HEK293 (cell line): ENCODE measurements at regions of chr19 and their contacts with region 1.

Region 1: GRCh38 chr19:48842789-48843162 is 6.5 kb upstream of the HSD17B14 start:
- H3K4me3 ChIP-seq: no peak overlapping the region
- H3K27ac ChIP-seq: no peak overlapping the region
- H3K4me1 ChIP-seq: no peaks in the 10 kb centered on the region
- CTCF ChIP-seq: peak; percentile 74

Region 2: DNA sequence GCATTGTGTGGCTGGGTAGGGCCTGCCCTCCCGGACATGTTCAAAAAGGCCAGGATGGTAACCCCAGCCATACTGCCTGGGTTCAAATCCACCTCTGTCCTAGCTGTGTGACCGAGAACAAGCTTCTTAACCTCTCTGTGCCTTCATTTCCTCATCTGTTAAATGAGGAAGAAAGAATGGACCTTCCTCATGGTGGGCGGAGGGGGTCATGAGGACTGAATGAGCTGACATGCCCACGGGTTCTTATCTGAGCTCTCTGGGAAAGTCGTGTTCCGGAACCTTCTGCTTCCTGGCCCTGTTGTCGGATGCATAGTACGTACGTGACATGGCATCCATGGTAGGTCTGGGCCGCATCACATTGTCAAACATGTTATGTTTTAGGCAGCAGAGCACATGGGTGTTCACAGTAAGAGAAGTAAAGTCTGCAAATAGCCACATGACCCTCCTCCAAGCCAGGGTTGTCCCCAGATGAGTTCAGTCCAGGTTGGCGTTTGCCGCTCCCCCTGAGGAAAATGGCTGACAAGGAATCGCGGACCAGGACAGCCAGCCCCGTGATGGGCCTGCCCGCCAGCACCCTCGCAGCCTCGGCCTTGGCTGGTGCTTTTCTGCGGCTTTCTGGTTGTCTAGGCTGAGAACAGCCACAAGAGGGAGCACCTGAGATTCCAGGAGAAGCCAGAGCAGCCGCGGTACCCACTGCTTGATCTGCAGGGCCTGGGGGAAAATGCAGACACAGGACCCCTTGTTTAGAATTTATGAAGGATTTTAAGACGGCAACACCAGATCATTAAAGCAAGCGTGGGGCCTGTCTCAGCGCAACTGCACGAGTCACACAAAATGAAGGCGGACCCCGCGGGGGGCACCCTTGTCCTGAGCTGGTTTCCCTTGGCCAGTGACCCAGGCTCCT is 167.6 kb before region 1 on chr19:
- CTCF ChIA-PET with region 1: interaction called, 20 read pairs
- POLR2A ChIA-PET with region 1: no interaction called
- H3K4me3 ChIP-seq: no peak overlapping the region
- H3K27ac ChIP-seq: no peak overlapping the region
- H3K4me1 ChIP-seq: no peaks in the 10 kb centered on the region; the same call in 1 of the 2 replicates
- CTCF ChIP-seq: peak; percentile 90

Region 3: DNA sequence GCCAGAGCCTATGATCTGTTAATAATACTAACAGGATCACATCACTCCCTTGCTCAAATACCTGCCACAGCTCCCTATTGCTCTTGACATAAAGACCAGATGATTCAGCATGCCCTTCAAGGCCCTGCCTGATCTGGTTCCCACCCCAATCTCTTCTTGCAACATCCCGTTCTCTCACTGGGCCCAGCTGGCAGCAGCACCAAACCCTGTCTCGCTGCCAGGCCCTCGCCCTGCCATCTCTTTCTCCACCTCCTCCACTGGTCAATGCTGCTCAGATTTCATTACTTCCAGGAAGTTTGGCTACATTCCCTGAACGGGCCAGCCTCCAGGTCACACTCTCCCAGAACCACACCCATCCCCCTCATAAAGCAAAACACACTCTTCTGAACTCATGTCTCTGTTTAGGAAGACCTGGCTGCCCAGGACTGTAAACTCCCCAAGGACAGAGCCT is 23.4 kb before region 1 on chr19:
- CTCF ChIA-PET with region 1: interaction called, 13 read pairs
- POLR2A ChIA-PET with region 1: no interaction called
- H3K4me3 ChIP-seq: no peak overlapping the region
- H3K27ac ChIP-seq: no peak overlapping the region
- H3K4me1 ChIP-seq: peaks cover 4% of the 10 kb centered on the region; the same call in 1 of the 2 replicates
- CTCF ChIP-seq: no peak

Region 4: DNA sequence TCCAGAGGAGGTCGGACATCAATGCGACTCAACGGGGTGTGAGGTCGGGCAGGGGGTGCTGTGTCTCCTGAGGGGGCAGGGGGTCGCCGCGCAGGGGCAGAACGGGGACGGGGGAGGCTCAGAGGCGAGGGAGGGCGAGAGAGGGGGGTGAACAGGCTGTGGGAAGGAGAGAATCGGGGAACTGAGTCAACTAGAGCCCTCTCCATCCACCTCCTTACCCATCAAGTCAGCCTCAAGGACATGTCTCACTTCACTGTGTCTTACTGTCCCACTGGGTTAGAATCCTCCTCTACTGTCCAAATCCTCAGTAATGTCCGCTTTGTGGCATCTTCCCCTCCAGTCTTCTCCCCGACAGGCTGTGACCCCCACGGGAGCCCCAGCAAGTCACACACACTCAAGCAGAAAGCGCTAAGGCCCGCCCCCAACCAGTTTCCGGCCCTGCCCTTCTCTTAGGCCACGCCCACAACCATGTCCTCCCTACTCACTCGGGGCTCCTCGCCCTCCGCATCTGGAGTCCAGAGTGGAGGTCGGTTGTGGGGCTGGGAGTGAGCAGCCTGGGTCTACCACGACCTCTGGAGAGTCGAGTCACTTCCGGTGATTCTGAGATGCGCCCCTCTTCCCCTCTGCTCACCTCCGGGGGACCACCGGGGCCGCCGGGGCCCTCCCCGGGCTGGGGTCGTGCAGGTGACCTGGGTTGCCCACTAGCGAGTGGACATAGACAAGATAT is 16.4 kb after region 1 on chr19:
- CTCF ChIA-PET with region 1: interaction called, 37 read pairs
- POLR2A ChIA-PET with region 1: interaction called, 3 read pairs
- H3K4me3 ChIP-seq: no peak overlapping the region
- H3K27ac ChIP-seq: no peak overlapping the region
- H3K4me1 ChIP-seq: no peaks in the 10 kb centered on the region
- CTCF ChIP-seq: no peak

Region 5: GRCh38 chr19:48965040-48965805 is 122.4 kb after region 1 on chr19 and contains the start of gene FTL:
- CTCF ChIA-PET with region 1: interaction called, 34 read pairs
- POLR2A ChIA-PET with region 1: interaction called, 10 read pairs
- H3K4me3 ChIP-seq: peak within 1 kb of the TSS; percentile 40
- H3K27ac ChIP-seq: peak within 1 kb of the TSS; percentile 82
- H3K4me1 ChIP-seq: peaks cover 20% of the 10 kb centered on the region
- CTCF ChIP-seq: 0 out of 2 replicates have a peak, but pooled peaks have one; percentile 12